Common myeloid progenitor, CD34-positive (primary cell): ENCODE measurements at regions of chr15 and their contacts with region 1.

Region 1: GRCh38 chr15:90201130-90201949 is at the start of gene SEMA4B:
- DNase-seq: peak; percentile 62 to 86 (median 76)
- H3K4me3 ChIP-seq: peak within 1 kb of the TSS; percentile 35 to 89 (median 79)
- H3K27ac ChIP-seq: peak within 1 kb of the TSS in 1 of 2 experiments; percentile 54
- H3K4me1 ChIP-seq: peaks cover 4 to 21% (median 17%) of the 10 kb centered on the region in 4 experiments
- H3K27me3 ChIP-seq: peaks cover 0 to 7% (median 0%) of the 10 kb centered on the region in 5 experiments

Region 2: DNA sequence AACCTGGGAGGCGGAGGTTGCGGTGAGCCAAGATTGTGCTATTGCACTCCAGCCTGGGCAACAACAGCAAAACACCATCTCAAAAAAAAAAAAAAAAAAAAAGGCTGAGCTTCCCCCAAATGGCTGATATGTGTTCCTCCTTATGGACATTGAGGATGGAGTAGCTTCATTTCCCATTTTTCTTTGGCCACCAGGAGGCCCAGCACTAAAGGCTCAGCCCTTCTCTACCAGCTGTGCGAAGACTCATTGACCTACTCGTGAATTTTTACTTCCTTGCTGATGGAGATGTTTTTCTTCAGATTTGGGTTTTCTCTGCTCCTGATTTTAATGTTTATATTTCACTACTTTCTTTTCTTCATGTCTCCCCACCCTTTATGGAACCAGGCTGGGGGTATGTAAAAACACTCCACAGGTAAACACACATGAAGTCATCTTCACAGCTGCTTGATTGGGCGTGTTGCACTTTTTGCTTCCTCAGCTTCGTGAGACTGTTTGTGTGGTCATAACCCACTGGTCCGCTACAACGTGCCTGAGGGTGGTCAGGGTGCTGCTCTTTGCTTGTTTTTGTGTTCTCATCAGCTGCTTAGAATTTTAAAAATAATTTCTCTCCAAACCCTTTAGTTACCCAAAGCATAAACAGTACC is 13.3 kb after region 1 on chr15:
- CTCF ChIA-PET with region 1: interaction called, 14 read pairs
- POLR2A ChIA-PET with region 1: no interaction called
- DNase-seq: no peak
- H3K4me3 ChIP-seq: no peak overlapping the region
- H3K27ac ChIP-seq: no peak overlapping the region
- H3K4me1 ChIP-seq: peaks cover 0 to 36% (median 27%) of the 10 kb centered on the region in 4 experiments
- H3K27me3 ChIP-seq: no peaks in the 10 kb centered on the region